Heart right ventricle (tissue), 16 donors: ENCODE measurements at regions of chr11 and their contacts with region 1.

Region 1: GRCh38 chr11:14036469-14036868 is 73.9 kb downstream of the SPON1 start:
- DNase-seq: no peak
- ATAC-seq: no peak
- H3K4me3 ChIP-seq: no peak overlapping the region
- H3K27ac ChIP-seq: no peak overlapping the region
- H3K4me1 ChIP-seq: no peaks in the 10 kb centered on the region
- H3K27me3 ChIP-seq: peaks cover 0 to 41% (median 7%) of the 10 kb centered on the region in 7 donors
- CTCF ChIP-seq: no peak

Region 2: GRCh38 chr11:13691286-13691899 is 345.1 kb before region 1 on chr11:
- intact Hi-C with region 1: no loop called
- DNase-seq: no peak
- ATAC-seq: no peak
- H3K4me3 ChIP-seq: no peak overlapping the region
- H3K27ac ChIP-seq: no peak overlapping the region
- H3K4me1 ChIP-seq: peaks cover 0 to 28% (median 20%) of the 10 kb centered on the region in 9 donors
- H3K27me3 ChIP-seq: no peaks in the 10 kb centered on the region
- CTCF ChIP-seq: no peak

Region 3: DNA sequence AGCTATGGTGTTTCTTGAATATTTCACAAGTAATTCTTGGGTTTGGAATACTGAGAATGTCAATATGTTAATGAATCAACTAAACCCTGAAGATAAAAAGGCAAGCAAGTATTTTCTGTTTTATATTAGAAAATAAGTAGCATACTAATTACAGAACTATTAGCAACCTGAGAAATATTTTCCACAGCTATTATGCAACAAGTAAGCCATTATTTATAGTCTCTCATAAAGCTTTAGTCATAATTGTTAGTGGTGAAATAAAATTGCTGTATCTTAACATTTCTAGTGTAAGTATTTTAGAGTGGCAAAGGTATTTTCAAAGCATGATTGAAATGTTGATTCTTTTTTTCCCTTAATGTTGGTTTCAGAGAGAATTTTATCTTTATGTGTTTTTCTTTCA is 314.7 kb before region 1 on chr11:
- intact Hi-C with region 1: no loop called
- DNase-seq: no peak
- ATAC-seq: no peak
- H3K4me3 ChIP-seq: no peak overlapping the region
- H3K27ac ChIP-seq: no peak overlapping the region
- H3K4me1 ChIP-seq: peaks cover 0 to 15% (median 0%) of the 10 kb centered on the region in 9 donors
- H3K27me3 ChIP-seq: no peaks in the 10 kb centered on the region
- CTCF ChIP-seq: no peak

Region 4: GRCh38 chr11:13970986-13971385 is 65.5 kb before region 1 on chr11:
- intact Hi-C with region 1: loop called in 1 of 10 experiments (anchors 5 kb)
- DNase-seq: no peak
- ATAC-seq: peak; percentile 28 to 54 (median 46)
- H3K4me3 ChIP-seq: no peak overlapping the region
- H3K27ac ChIP-seq: no peak overlapping the region
- H3K4me1 ChIP-seq: peaks cover 0 to 22% (median 12%) of the 10 kb centered on the region in 9 donors
- H3K27me3 ChIP-seq: peaks cover 0 to 49% (median 36%) of the 10 kb centered on the region in 7 donors
- CTCF ChIP-seq: peak in 7 of 9 donors; percentile 18 to 50 (median 36)

Region 5: DNA sequence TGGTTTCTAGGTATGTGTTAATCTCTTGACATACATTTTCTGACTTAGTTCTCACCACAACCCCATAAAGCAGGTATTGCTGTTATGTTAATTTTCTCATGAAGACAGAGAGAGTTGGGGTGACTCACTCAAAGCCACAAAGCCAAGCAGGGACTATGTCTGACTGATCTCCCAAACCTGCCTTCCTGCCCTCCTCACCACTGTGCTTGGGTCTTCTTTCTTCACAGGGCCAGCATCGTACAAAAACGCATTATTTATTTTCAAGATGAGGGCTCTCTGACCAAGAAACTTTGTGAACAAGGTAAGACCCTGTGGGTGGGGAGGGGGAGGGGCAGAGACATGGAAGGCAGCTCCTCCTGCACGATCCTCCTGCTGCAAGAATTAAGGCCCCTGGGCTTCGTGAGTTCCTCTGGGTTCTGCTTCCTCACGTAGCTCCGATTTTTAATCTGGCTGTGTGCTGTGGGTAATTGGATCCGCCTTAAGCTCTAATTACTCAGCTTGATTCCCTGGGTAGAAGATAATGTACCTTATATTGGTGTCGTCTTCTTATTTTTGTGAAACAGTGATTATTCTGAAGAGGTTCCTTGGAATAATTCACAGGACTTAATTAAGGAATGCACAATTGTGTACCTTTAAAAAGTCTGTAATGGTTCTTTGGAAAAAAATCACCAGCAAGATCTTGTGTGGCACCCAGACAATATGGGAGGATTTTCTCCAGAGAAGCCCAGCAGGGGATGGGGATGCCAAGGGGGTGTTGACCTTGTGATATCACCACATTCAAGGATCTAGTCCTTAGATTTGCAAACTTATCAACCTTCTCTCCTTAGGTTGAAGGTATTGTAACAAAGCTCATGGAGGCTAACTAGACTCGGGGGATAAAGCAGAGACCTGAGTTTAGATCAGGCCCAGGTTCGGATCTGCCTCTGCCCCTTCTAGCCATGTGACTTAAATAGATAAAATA is 38.9 kb after region 1 on chr11:
- intact Hi-C with region 1: no loop called
- DNase-seq: no peak
- ATAC-seq: no peak
- H3K4me3 ChIP-seq: no peak overlapping the region
- H3K27ac ChIP-seq: peak overlapping the region in 1 of 10 donors; percentile 2
- H3K4me1 ChIP-seq: peaks cover 0 to 19% (median 0%) of the 10 kb centered on the region in 9 donors
- H3K27me3 ChIP-seq: peaks cover 0 to 13% (median 0%) of the 10 kb centered on the region in 7 donors
- CTCF ChIP-seq: no peak